ENCODE measurements at regions of chr19 and their contacts with region 1.

Region 1: DNA sequence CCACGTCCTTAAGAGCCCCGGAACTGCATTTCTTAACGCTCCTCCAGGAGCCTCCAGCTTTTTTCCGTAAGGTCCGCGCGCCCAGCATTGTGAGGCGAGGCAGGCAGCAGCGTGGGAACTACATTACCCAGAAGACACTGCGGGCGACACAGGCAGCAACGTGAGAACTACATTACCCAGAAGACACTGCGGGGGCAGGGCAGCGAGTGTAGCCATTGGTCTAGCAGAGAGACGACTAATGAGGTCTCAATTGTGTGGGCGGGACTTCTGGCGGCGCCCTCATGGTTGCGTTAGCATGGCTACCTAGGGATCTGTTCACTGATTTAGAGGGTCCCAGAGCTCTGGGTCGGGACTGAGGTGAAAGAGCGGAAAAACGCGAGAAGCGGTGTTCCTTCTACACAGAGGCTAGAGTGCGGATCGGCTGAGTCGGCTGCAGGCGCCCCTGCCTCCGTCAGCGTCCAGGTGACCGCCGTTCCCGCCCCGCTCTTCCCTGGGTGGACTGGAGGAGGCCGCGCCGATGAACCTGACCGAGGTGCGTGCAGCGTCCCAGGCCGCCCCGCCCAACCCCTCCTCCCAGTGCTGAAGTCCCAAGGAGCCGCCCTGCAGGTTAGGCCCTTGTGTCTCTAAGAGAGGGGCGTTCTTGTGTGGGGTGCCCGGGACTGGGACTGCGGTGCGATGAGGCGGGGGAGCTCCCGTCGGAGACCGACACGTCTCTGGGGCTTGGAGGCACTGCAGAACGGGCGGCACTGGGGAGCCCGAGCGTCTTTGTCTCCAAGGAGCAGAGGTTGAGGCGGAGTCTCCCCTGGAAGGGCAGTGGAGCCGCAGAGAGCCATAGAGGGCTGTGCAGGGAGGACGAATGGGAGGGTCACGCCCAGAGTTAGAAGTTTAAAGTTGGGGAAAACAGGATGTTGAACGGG is at the start of gene ZNF749:
- DNase-seq: peak; percentile 97 to 99 (median 99)
- ATAC-seq: peak; percentile 99 to 100 (median 100)
- H3K4me3 ChIP-seq: peak within 1 kb of the TSS; percentile 43 to 94 (median 88)
- H3K27ac ChIP-seq: peak within 1 kb of the TSS in 8 of 12 donors; percentile 29 to 69 (median 50)
- H3K4me1 ChIP-seq: peaks cover 0 to 24% (median 15%) of the 10 kb centered on the region in 12 donors
- H3K27me3 ChIP-seq: no peaks in the 10 kb centered on the region
- CTCF ChIP-seq: no peak
- POLR2A ChIP-seq: peak in 1 of 2 donors; percentile 40
- total RNA-seq, gene ZNF749: 2.0 to 8.2 (median 3.7) TPM

Region 2: GRCh38 chr19:57410877-57411671 is 24.2 kb before region 1 on chr19 and contains the start of gene ZNF17:
- intact Hi-C with region 1: loop called in 1 of 10 experiments (anchors 2 kb)
- DNase-seq: peak; percentile 94 to 96 (median 95)
- ATAC-seq: peak; percentile 99 to 100 (median 100)
- H3K4me3 ChIP-seq: peak within 1 kb of the TSS; percentile 73 to 98 (median 88)
- H3K27ac ChIP-seq: peak within 1 kb of the TSS; percentile 55 to 84 (median 80)
- H3K4me1 ChIP-seq: peaks cover 0 to 37% (median 15%) of the 10 kb centered on the region in 12 donors
- H3K27me3 ChIP-seq: no peaks in the 10 kb centered on the region
- CTCF ChIP-seq: no peak
- POLR2A ChIP-seq: peak in 1 of 2 donors; percentile 71
- total RNA-seq, gene ZNF17: 3.9 to 13.5 (median 9.0) TPM

Region 3: DNA sequence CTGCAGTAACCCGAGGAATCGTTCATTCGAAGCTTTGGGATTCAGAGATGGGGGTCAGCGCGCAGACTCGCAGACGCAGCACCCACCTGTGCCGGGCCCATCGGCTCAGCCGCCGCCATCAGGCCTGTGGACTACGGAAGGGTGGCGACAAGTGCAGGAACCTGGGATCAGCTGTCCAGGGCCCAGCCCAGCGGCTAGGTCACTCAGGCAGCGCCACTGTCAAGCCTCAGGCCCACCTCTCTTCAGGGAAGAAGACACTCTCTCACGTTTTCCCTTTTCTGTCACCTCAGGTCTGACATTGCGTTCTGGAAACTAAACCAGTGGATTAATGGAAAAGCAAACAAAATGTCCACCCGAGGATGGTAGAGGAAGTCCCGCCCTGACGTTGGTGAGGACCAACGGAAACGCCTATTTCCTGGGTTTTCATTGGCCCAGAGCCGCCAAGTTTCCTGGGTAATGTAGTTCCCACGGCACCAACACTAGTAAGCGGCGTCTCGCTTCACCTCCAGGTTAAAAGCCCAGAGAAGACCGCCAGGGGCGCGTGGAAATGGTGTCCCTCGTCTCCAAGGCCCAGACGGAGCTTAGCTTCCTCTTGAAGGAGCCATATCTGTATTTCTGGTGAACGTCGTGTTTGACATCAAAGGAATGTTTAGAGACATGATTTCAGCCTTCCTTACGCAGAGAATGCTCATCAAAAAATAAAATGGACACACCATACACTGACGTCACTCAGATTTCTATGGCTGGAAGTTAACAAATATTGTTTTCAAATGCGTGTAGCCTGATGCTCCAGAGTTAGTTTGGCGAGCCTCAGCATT is 42.1 kb after region 1 on chr19 and contains the start of gene ZNF772:
- intact Hi-C with region 1: loop called in 1 of 10 experiments (anchors 2 kb)
- DNase-seq: peak; percentile 89 to 96 (median 96)
- ATAC-seq: peak; percentile 99 to 100 (median 100)
- H3K4me3 ChIP-seq: peak within 1 kb of the TSS; percentile 45 to 93 (median 70)
- H3K27ac ChIP-seq: peak within 1 kb of the TSS; percentile 73 to 94 (median 85)
- H3K4me1 ChIP-seq: peaks cover 0 to 15% (median 5%) of the 10 kb centered on the region in 12 donors
- H3K27me3 ChIP-seq: no peaks in the 10 kb centered on the region
- CTCF ChIP-seq: peak; percentile 5 to 93 (median 68)
- POLR2A ChIP-seq: no peak
- total RNA-seq, gene ZNF772: 15.7 to 30.1 (median 24.1) TPM

Measured in heart left ventricle (tissue), 16 donors.